Heart left ventricle (tissue), 16 donors: ENCODE measurements at regions of chr19 and their contacts with region 1.

Region 1: GRCh38 chr19:52962394-52963246 is at the start of gene ZNF816:
- DNase-seq: peak; percentile 97 to 99 (median 98)
- ATAC-seq: peak; percentile 98 to 100 (median 100)
- H3K4me3 ChIP-seq: peak within 1 kb of the TSS; percentile 40 to 99 (median 72)
- H3K27ac ChIP-seq: peak within 1 kb of the TSS; percentile 5 to 95 (median 80)
- H3K4me1 ChIP-seq: peaks cover 0 to 20% (median 10%) of the 10 kb centered on the region in 12 donors
- H3K27me3 ChIP-seq: no peaks in the 10 kb centered on the region
- CTCF ChIP-seq: no peak
- POLR2A ChIP-seq: peak in 1 of 2 donors; percentile 64
- total RNA-seq, gene ZNF816: 2.1 to 8.0 (median 4.3) TPM

Region 2: DNA sequence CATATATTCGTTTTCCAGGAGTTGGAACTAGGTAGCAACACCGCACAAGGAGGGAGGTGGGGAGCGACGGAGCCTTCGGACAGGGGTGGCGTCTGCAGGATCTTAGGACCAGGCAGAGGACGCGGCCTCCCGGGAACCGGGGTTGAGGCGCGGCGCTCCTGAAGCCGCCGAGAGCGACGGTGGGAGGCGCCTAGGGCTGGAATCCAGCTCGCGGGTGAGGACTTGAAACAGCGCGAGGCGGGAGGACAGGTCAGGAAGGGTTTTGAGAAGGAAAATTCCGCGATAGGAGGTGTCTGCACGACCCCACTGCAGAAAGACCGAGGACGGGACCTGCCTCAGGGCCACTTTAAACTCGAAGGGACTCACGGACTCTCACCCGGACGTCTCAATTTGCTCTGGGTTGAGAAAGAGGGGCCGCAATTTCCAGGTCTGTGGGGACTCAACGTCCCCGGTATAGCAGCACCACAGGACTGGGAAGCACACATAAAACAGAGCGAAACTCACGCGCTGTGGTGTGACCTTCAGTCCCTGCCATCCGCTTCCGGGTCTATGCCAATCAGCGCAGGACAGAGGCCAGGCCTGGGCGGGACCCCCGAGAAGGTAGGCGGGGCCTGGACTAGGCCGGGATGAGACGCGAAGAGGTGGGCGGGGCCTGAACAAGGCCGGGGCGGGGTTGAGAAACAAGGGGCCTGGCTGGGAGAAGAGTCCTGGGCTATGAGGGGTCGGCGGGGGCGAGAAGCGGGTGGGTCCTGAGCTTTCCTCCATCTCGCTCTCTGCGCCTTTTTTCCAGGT is 65.3 kb before region 1 on chr19 and contains the start of gene ZNF320:
- intact Hi-C with region 1: loop called in 1 of 10 experiments (anchors 2 kb)
- DNase-seq: peak; percentile 97 to 98 (median 98)
- ATAC-seq: peak; percentile 100
- H3K4me3 ChIP-seq: peak within 1 kb of the TSS; percentile 66 to 96 (median 86)
- H3K27ac ChIP-seq: peak within 1 kb of the TSS; percentile 80 to 98 (median 93)
- H3K4me1 ChIP-seq: peaks cover 0 to 20% (median 11%) of the 10 kb centered on the region in 12 donors
- H3K27me3 ChIP-seq: no peaks in the 10 kb centered on the region
- CTCF ChIP-seq: no peak
- POLR2A ChIP-seq: peak in 1 of 2 donors; percentile 81
- total RNA-seq, gene ZNF320: 7.6 to 13.5 (median 9.6) TPM

Region 3: GRCh38 chr19:52922841-52923777 is 39.5 kb before region 1 on chr19 and contains the start of gene ZNF888:
- intact Hi-C with region 1: loop called in 1 of 10 experiments (anchors 5 kb)
- DNase-seq: peak; percentile 81 to 94 (median 88)
- ATAC-seq: peak; percentile 97 to 100 (median 99)
- H3K4me3 ChIP-seq: peak within 1 kb of the TSS; percentile 50 to 90 (median 74)
- H3K27ac ChIP-seq: peak within 1 kb of the TSS; percentile 54 to 91 (median 70)
- H3K4me1 ChIP-seq: peaks cover 0 to 22% (median 10%) of the 10 kb centered on the region in 12 donors
- H3K27me3 ChIP-seq: no peaks in the 10 kb centered on the region
- CTCF ChIP-seq: no peak
- POLR2A ChIP-seq: no peak
- total RNA-seq, gene ZNF888: 0.88 to 3.2 (median 1.3) TPM

Region 4: DNA sequence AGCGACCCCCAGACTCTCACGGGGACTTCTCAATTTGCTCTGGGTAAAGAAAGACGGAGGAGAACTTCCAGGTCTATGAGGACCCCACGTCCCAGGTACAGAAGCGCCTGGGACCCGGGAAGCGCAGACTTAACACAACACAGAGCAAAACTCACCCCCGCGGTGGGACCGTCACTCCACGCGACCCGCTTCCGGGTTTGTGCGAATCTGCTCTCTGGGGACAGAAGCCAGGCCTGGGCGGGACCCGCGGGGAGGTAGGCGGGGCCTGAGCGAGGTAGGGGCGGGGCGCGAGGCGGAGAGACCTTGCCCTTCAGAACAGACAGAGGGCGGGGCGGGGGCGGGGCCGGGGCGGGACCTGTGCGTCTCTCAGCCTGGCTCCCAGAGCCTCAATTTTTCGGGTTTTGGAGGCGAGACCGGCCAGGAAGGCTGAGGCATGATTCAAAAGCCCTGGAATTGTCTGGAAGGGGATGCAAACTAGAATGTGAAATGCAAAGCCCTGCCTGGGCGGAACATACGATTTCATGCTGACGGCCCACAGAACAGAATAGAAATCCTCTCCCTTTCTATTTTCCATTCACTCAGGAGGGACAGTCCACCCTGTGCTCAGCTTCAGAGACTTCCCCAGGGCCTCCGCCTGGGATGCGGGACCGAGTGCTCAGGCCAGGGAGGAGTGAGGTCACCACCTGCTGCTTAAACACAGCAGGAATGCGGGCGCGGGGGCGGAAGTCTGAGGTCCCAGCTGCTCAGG is 20.1 kb before region 1 on chr19:
- intact Hi-C with region 1: loop called in 4 of 10 experiments (anchors 1 to 2 kb)
- DNase-seq: peak; percentile 89 to 96 (median 93)
- ATAC-seq: peak; percentile 96 to 99 (median 98)
- H3K4me3 ChIP-seq: peak overlapping the region; percentile 55 to 89 (median 74)
- H3K27ac ChIP-seq: peak overlapping the region; percentile 55 to 87 (median 77)
- H3K4me1 ChIP-seq: peaks cover 0 to 27% (median 5%) of the 10 kb centered on the region in 12 donors
- H3K27me3 ChIP-seq: no peaks in the 10 kb centered on the region
- CTCF ChIP-seq: peak in 2 of 12 donors; percentile 2 to 6
- POLR2A ChIP-seq: peak in 1 of 2 donors; percentile 83

Region 5: GRCh38 chr19:52993323-52994178 is 30.9 kb after region 1 on chr19:
- intact Hi-C with region 1: loop called in 2 of 10 experiments (anchors 2 kb)
- DNase-seq: peak; percentile 76 to 88 (median 82)
- ATAC-seq: peak; percentile 81 to 96 (median 92)
- H3K4me3 ChIP-seq: peak overlapping the region; percentile 44 to 79 (median 61)
- H3K27ac ChIP-seq: peak overlapping the region in 11 of 12 donors; percentile 10 to 80 (median 62)
- H3K4me1 ChIP-seq: peaks cover 0 to 21% (median 7%) of the 10 kb centered on the region in 12 donors
- H3K27me3 ChIP-seq: peaks cover 0 to 4% (median 0%) of the 10 kb centered on the region in 9 donors
- CTCF ChIP-seq: peak; percentile 53 to 83 (median 76)
- POLR2A ChIP-seq: no peak

Region 6: DNA sequence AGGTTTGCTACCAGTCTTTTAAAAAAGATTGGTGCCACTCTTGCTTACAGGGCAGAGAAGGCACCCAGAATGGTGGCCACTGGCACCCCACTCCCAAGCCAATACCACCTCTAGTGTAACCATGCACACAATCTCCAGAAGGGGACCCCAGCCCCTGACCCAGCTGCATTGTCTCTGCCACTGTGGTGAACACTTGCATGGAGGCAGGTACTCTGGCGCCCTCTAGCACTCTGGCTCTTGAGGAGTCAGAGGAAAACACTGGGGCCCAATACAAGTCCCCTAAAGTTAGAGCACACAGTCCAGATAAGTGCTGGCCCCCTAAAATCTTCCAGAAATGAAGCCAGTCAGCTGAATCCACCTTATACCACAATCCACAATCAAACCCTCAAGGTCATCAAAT is 57.1 kb after region 1 on chr19:
- intact Hi-C with region 1: no loop called
- DNase-seq: no peak
- ATAC-seq: no peak
- H3K4me3 ChIP-seq: no peak overlapping the region
- H3K27ac ChIP-seq: no peak overlapping the region
- H3K4me1 ChIP-seq: no peaks in the 10 kb centered on the region
- H3K27me3 ChIP-seq: peaks cover 0 to 2% (median 0%) of the 10 kb centered on the region in 9 donors
- CTCF ChIP-seq: peak in 1 of 12 donors; percentile 7
- POLR2A ChIP-seq: no peak